Activated CD8-positive, alpha-beta T cell treated with anti-CD3 and anti-CD28 coated beads for 36 hours (primary cell): ENCODE measurements at regions of chr14 and their contacts with region 1.

Region 1: DNA sequence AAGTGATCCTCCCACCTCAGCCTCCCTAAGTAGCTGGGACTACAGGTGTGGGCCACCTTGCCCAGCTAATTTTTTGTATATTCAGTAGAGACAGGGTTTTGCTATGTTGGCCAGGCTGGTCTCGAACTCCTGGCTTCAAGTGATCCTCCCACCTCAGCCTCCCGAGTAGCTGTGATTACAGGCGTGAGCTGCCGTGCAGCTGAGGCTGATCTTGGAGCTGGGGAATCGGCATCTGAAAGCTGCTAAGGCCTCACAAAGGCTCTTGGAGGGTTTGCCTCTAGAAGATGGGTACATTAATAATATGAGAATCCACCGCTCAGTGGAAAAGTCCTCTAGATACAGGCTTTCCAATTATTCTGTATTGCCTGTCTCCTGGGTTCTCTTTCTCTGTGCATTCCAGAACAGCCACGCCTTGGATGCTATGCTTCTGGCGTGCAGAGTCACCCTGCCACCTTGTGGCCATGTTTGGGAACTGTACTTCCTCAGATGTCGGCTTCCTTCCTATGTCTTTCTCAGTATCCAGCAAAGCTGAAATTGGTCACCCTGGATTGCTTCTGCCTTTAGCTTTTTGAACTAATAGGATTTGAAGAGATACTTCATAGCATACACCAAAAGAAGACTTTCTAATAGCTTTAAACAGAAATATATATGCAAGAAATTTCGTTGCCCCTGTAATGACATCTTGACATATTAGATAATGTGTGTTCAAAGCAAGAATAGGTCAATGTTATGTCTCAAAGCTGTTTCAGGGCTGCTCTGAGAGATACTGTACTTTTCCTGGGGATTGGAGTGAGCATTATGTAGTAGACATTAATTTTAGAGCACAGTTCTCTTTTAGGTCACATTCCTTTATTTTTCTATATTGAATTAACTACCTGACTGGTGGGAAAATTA is 75.4 kb downstream of the SNAPC1 start:
- DNase-seq: peak; percentile 87
- ATAC-seq: peak; percentile 99
- H3K4me3 Mint-ChIP-seq: no peak overlapping the region
- H3K27ac Mint-ChIP-seq: no peak overlapping the region
- H3K4me1 Mint-ChIP-seq: peaks cover 4% of the 10 kb centered on the region
- H3K27me3 Mint-ChIP-seq: peaks cover 3% of the 10 kb centered on the region
- CTCF ChIP-seq: peak; percentile 98

Region 2: GRCh38 chr14:61287196-61287595 is 550.4 kb before region 1 on chr14:
- CTCF ChIA-PET with region 1: interaction called, 20 read pairs
- POLR2A ChIA-PET with region 1: no interaction called
- intact Hi-C with region 1: loop called (anchors 10 kb)
- DNase-seq: no peak
- ATAC-seq: no peak
- H3K4me3 Mint-ChIP-seq: no peak overlapping the region
- H3K27ac Mint-ChIP-seq: no peak overlapping the region
- H3K4me1 Mint-ChIP-seq: peaks cover 20% of the 10 kb centered on the region
- H3K27me3 Mint-ChIP-seq: no peaks in the 10 kb centered on the region
- CTCF ChIP-seq: no peak

Region 3: DNA sequence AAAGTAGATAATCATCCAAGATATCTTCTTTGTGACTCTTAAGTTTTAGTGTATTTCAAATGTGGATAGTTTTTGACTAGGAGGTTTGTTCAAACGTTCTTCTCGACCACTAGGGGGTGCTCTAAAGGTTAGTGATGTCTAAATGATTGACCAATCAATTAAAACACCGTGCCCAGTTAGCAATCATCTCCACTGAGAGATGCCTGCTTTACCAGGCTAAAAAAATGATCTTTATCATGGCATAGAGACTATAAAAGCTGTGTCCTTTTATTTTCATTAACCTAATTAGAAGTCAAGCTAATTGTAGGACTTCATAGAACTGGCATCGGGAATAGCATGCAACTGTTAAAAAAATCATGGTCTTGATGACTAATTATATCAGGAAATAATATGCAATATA is 362.3 kb before region 1 on chr14:
- CTCF ChIA-PET with region 1: interaction called, 36 read pairs
- POLR2A ChIA-PET with region 1: interaction called, 4 read pairs
- intact Hi-C with region 1: no loop called
- DNase-seq: no peak
- ATAC-seq: no peak
- H3K4me3 Mint-ChIP-seq: peak overlapping the region; percentile 47
- H3K27ac Mint-ChIP-seq: peak overlapping the region; percentile 92
- H3K4me1 Mint-ChIP-seq: peaks cover 91% of the 10 kb centered on the region
- H3K27me3 Mint-ChIP-seq: no peaks in the 10 kb centered on the region
- CTCF ChIP-seq: peak; percentile 86

Region 4: GRCh38 chr14:61744239-61744638 is 93.3 kb before region 1 on chr14:
- CTCF ChIA-PET with region 1: interaction called, 17 read pairs
- POLR2A ChIA-PET with region 1: no interaction called
- intact Hi-C with region 1: no loop called
- DNase-seq: no peak
- ATAC-seq: no peak
- H3K4me3 Mint-ChIP-seq: no peak overlapping the region
- H3K27ac Mint-ChIP-seq: no peak overlapping the region
- H3K4me1 Mint-ChIP-seq: peaks cover 15% of the 10 kb centered on the region
- H3K27me3 Mint-ChIP-seq: no peaks in the 10 kb centered on the region
- CTCF ChIP-seq: no peak

Region 5: GRCh38 chr14:61822458-61822857 is 15.1 kb before region 1 on chr14:
- CTCF ChIA-PET with region 1: interaction called, 17 read pairs
- POLR2A ChIA-PET with region 1: no interaction called
- intact Hi-C with region 1: no loop called
- DNase-seq: no peak
- ATAC-seq: peak; percentile 24
- H3K4me3 Mint-ChIP-seq: no peak overlapping the region
- H3K27ac Mint-ChIP-seq: no peak overlapping the region
- H3K4me1 Mint-ChIP-seq: peaks cover 3% of the 10 kb centered on the region
- H3K27me3 Mint-ChIP-seq: peaks cover 4% of the 10 kb centered on the region
- CTCF ChIP-seq: no peak

Region 6: DNA sequence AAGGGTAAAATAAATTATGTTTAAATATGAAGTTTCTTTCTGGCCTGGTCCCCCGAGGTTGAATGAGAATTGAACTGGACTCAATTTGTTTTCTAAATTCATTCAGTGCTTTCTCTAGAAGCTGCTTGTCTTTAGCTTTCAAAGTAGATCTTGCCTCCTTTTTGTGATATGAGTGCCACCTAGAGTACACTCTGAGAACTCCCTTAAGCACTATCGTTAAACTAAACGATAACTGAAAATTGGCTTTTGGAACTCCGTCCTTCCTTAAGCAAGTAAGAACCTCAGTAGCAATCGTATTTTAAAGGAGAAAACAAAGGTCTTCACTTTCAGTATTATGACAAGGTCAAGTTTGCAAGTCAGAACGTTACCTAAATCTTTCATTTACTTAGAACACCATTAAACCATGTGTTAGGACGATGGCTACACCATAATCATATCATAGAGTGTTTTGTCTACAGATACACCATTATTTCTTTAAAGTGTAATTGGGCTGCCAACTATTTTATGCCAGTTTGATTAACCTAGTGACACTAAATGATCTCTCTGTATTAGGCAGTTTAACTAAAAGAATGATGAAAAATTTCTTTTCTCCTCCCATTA is 289.4 kb after region 1 on chr14:
- CTCF ChIA-PET with region 1: interaction called, 15 read pairs
- POLR2A ChIA-PET with region 1: no interaction called
- intact Hi-C with region 1: no loop called
- DNase-seq: no peak
- ATAC-seq: peak; percentile 75
- H3K4me3 Mint-ChIP-seq: no peak overlapping the region
- H3K27ac Mint-ChIP-seq: no peak overlapping the region
- H3K4me1 Mint-ChIP-seq: no peaks in the 10 kb centered on the region
- H3K27me3 Mint-ChIP-seq: peaks cover 30% of the 10 kb centered on the region
- CTCF ChIP-seq: peak; percentile 87